Activated CD4-positive, alpha-beta memory T cell treated with anti-CD3 and anti-CD28 coated beads, Interleukin-2, amount 10 ng/mL, durations not matched to agents 7 days and 5 days (primary cell): ENCODE measurements at regions of chr3 and their contacts with region 1.

Region 1: GRCh38 chr3:108221911-108222852 is at the start of gene IFT57:
- DNase-seq: peak; percentile 96
- H3K4me3 Mint-ChIP-seq: peak within 1 kb of the TSS; percentile 97
- H3K27ac Mint-ChIP-seq: peak within 1 kb of the TSS; percentile 97
- H3K4me1 Mint-ChIP-seq: peaks cover 46% of the 10 kb centered on the region
- H3K27me3 Mint-ChIP-seq: no peaks in the 10 kb centered on the region
- total RNA-seq, gene IFT57: 21.0 to 28.0 TPM

Region 2: DNA sequence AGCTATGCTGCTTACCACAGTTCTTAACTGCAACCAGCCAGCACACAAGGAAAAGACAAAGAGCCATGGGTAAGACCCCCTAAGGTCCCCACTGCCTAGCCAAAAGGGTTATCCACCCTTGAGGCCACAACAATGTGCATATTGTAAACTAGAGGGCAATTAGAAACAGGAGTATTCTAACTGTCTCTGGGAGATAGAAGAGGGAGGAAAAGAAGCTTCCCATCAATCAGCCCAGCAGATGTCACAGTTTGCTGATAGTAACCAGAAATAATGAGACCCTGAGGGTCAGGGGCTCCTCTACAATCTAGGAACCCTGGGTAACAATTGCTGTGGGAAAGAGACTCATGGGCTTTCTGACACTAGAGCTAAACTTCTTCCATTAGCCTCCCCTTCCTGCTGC is 20.6 kb after region 1 on chr3:
- CTCF ChIA-PET with region 1: no interaction called
- POLR2A ChIA-PET with region 1: no interaction called
- DNase-seq: no peak
- H3K4me3 Mint-ChIP-seq: no peak overlapping the region
- H3K27ac Mint-ChIP-seq: no peak overlapping the region
- H3K4me1 Mint-ChIP-seq: peaks cover 5% of the 10 kb centered on the region
- H3K27me3 Mint-ChIP-seq: no peaks in the 10 kb centered on the region

Region 3: DNA sequence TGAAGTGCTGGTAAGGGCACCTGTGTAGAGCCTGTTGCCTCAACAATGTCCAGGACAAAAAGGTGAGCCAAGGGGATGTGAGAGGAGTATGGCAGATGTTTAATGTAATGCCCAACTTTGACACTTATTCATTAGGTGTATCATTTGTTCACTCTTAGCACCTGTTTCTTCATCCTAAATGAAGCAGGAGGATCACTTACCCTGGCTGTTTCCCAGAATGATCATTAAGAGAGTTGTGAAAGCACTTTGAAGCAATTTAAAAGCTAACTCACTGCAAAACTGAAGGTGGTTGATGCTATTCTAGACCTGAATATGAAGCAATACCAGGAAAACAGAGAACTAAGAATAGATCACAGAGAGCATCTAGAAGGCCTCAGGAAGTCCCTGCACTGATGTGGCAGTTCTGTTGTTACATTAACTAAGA is 70.7 kb after region 1 on chr3:
- CTCF ChIA-PET with region 1: interaction called, 3 read pairs
- POLR2A ChIA-PET with region 1: interaction called, 37 read pairs
- DNase-seq: no peak
- H3K4me3 Mint-ChIP-seq: peak overlapping the region; percentile 7
- H3K27ac Mint-ChIP-seq: peak overlapping the region; percentile 89
- H3K4me1 Mint-ChIP-seq: peaks cover 59% of the 10 kb centered on the region
- H3K27me3 Mint-ChIP-seq: no peaks in the 10 kb centered on the region

Region 4: GRCh38 chr3:108301695-108302404 is 79.7 kb after region 1 on chr3:
- CTCF ChIA-PET with region 1: no interaction called
- POLR2A ChIA-PET with region 1: interaction called, 24 read pairs
- DNase-seq: peak; percentile 32
- H3K4me3 Mint-ChIP-seq: peak overlapping the region; percentile 56
- H3K27ac Mint-ChIP-seq: peak overlapping the region; percentile 84
- H3K4me1 Mint-ChIP-seq: peaks cover 63% of the 10 kb centered on the region
- H3K27me3 Mint-ChIP-seq: no peaks in the 10 kb centered on the region

Region 5: GRCh38 chr3:108342837-108343478 is 120.8 kb after region 1 on chr3:
- CTCF ChIA-PET with region 1: no interaction called
- POLR2A ChIA-PET with region 1: interaction called, 23 read pairs
- DNase-seq: no peak
- H3K4me3 Mint-ChIP-seq: no peak overlapping the region
- H3K27ac Mint-ChIP-seq: peak overlapping the region; percentile 76
- H3K4me1 Mint-ChIP-seq: peaks cover 35% of the 10 kb centered on the region
- H3K27me3 Mint-ChIP-seq: peaks cover 1% of the 10 kb centered on the region